Dorsolateral prefrontal cortex (tissue), 120 donors: ENCODE measurements at regions of chr12 and their contacts with region 1.

Region 1: GRCh38 chr12:117874842-117875434 is 93.9 kb downstream of the KSR2 start:
- DNase-seq: peak; percentile 65 to 86 (median 76)
- H3K4me3 ChIP-seq: peak overlapping the region in 41 of 59 donors; percentile 7 to 54 (median 27)
- H3K27ac ChIP-seq: peak overlapping the region in 52 of 59 donors; percentile 6 to 89 (median 74)
- H3K27me3 ChIP-seq: peaks cover 0 to 5% (median 0%) of the 10 kb centered on the region in 45 donors
- CTCF ChIP-seq: peak; percentile 77 to 96 (median 91)

Region 2: GRCh38 chr12:117643971-117644370 is 231.0 kb before region 1 on chr12:
- intact Hi-C with region 1: no loop called
- DNase-seq: no peak
- H3K4me3 ChIP-seq: no peak overlapping the region
- H3K27ac ChIP-seq: no peak overlapping the region
- H3K27me3 ChIP-seq: peaks cover 0 to 10% (median 0%) of the 10 kb centered on the region in 45 donors
- CTCF ChIP-seq: no peak

Region 3: GRCh38 chr12:117968826-117969659 is 94.1 kb after region 1 on chr12 and contains the start of gene KSR2:
- intact Hi-C with region 1: loop called in 1 of 2 experiments (anchors 5 kb)
- DNase-seq: peak; percentile 30 to 83 (median 73)
- H3K4me3 ChIP-seq: peak within 1 kb of the TSS; percentile 34 to 76 (median 59)
- H3K27ac ChIP-seq: peak within 1 kb of the TSS in 55 of 59 donors; percentile 26 to 93 (median 76)
- H3K27me3 ChIP-seq: peaks cover 0 to 34% (median 6%) of the 10 kb centered on the region in 45 donors
- CTCF ChIP-seq: no peak
- total RNA-seq, gene KSR2: 12.2 to 55.1 (median 39.1) TPM

Region 4: GRCh38 chr12:118035246-118036041 is 160.5 kb after region 1 on chr12:
- intact Hi-C with region 1: loop called (anchors 2 to 5 kb)
- DNase-seq: peak in 2 of 10 donors; percentile 27 to 55
- H3K4me3 ChIP-seq: no peak overlapping the region
- H3K27ac ChIP-seq: peak overlapping the region in 52 of 59 donors; percentile 1 to 92 (median 70)
- H3K27me3 ChIP-seq: no peaks in the 10 kb centered on the region
- CTCF ChIP-seq: peak in 1 of 56 donors; percentile 6

Region 5: DNA sequence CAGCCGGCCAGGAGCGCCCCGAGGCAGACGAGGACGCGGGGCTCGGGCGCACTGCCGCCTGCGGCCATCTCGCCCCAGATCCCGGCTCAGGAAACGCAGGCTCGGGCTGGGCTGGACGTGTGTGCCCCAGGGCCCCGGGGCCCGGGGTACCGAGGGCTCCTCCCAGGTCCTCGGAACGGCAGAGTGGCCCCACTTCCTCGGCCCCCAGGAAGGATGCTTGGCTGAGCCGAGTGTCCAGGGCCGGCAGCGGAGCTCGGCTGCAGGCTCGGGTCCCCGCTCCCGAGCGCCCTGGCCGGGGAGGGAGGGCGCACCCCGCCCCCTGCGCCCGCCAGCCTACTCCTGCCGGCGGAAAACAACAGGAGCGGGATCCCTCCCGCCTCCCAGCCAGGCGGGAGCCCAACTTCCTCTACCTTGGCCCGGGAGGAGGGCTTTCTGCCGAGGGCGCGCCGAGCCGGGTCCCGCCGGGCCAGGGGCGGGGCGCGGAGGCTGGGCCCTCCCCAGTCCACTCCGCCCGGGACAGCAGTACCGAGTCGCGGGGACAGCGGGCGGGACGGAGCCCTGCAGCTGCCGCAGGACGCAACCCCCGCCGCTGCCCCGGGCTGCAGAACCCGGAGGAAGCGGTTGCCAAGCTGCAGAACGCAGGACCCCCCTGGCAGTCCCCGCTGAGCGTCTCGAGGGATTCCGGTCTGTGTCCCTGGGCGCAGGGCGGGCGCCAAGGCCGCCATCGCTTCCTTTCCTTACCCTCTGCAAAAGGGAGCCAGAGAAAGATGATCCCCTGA is 228.9 kb after region 1 on chr12 and contains the start of gene VSIG10:
- intact Hi-C with region 1: loop called in 1 of 2 experiments (anchors 5 kb)
- DNase-seq: peak in 8 of 10 donors; percentile 12 to 69 (median 30)
- H3K4me3 ChIP-seq: peak within 1 kb of the TSS; percentile 56 to 90 (median 78)
- H3K27ac ChIP-seq: peak within 1 kb of the TSS in 53 of 59 donors; percentile 6 to 85 (median 60)
- H3K27me3 ChIP-seq: no peaks in the 10 kb centered on the region
- CTCF ChIP-seq: peak in 5 of 56 donors; percentile 5 to 28 (median 17)
- total RNA-seq, gene VSIG10: 9.9 to 40.2 (median 19.8) TPM